ENCODE measurements at regions of chr20 and their contacts with region 1.

Region 1: DNA sequence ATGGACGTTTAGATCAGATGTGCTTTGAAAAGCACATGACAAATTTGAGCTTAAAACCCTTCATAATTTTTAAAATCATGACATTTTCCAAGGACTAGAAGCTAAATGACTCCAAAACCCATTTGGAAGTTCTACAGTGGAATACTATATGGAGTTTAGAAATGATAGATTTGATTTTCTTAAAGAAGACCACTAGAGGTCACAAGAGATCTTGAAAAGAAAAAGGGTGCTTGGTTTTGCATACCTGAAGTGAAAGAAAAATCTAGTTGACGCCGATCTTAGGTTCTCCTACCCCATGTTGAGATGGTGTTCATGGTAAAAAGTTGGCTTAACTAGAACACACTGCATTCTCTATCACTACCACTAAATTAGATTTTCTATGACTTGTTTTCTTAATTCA is 31.5 kb downstream of the CFAP61 start:
- DNase-seq: peak; percentile 52
- ATAC-seq: peak; percentile 84
- H3K4me3 ChIP-seq: no peak overlapping the region; a peak in 1 of 6 replicates
- H3K27ac ChIP-seq: no peak overlapping the region
- H3K4me1 ChIP-seq: 0 out of 2 replicates have a peak, but pooled peaks cover 12% of the 10 kb centered on the region
- H3K27me3 ChIP-seq: peaks cover 0 to 17% of the 10 kb centered on the region in 2 experiments; a peak in 2 of 5 replicates
- CTCF ChIP-seq: peak; percentile 73
- EP300 ChIP-seq: no peak
- POLR2A ChIP-seq: no peak
- RAD21 ChIP-seq: peak; percentile 21; the same call in 1 of the 2 replicates

Region 2: DNA sequence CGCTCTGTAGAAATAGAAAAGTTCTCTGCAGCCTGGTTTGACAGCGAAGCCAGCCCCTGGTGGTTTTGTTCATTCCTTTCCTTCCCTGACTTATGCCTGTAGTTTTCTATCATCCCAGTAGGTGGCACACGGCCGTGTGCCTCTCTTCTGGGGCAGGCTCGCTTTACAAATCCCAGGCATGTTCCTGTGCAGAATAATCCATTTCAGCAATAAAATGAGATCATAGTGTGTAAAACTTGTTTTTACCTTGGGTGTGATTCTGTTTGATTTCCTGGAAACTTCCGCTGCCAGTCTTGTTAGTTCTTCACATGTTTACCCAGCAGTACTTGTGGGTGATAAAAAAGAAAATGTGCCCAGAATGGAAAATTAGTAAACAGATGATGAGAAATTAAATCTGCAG is 276.7 kb after region 1 on chr20:
- CTCF ChIA-PET with region 1: no interaction called
- POLR2A ChIA-PET with region 1: no interaction called
- in situ Hi-C with region 1: no loop called
- intact Hi-C with region 1: loop called (anchors 5 kb)
- DNase-seq: peak; percentile 67
- ATAC-seq: peak; percentile 89
- H3K4me3 ChIP-seq: no peak overlapping the region
- H3K27ac ChIP-seq: no peak overlapping the region
- H3K4me1 ChIP-seq: peaks cover 20% of the 10 kb centered on the region; the same call in 1 of the 2 replicates
- H3K27me3 ChIP-seq: peaks cover 11 to 42% of the 10 kb centered on the region in 2 experiments
- CTCF ChIP-seq: peak; percentile 92
- EP300 ChIP-seq: no peak
- POLR2A ChIP-seq: no peak
- RAD21 ChIP-seq: peak; percentile 80